Activated CD4-positive, alpha-beta T cell treated with anti-CD3 and anti-CD28 coated beads, Interleukin-2, amount 10 ng/mL, durations not matched to agents 7 days and 5 days (primary cell): ENCODE measurements at regions of chr1 and their contacts with region 1.

Region 1: DNA sequence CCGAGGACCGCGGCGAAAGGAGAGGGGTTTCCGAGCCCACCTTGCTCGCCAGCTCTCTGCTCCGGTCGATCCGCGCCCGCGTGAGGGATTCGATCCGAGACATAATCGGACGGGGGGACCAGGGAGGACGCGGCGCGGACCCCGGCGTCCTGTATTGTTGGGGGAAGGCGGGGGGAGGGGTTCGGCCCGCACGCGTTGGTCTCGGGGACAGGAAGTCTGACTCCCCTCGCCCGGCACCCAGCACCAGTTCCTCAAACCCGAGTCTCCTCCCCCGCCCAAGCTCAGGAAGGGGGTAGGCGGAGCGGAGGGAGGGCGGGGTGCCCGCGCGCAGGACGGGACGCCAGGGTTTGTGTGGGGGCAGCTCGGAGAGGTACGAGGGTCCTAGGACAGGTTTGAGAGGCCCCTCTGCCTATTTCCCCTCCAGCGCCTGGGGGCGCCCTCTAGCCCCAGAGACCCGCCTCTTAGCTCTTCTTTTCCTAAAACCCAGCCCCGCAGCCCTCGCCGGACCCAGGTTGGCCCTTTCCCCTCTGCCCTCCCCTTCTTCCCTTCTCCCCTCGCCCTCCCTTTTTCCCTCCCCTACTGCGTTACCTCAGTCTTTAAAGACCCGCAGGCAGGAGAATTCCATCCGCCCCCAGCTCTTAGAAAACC is at the start of gene ARHGEF2:
- DNase-seq: peak; percentile 84
- H3K4me3 Mint-ChIP-seq: peak within 1 kb of the TSS; percentile 99
- H3K27ac Mint-ChIP-seq: peak within 1 kb of the TSS; percentile 87
- H3K4me1 Mint-ChIP-seq: peaks cover 70% of the 10 kb centered on the region
- H3K27me3 Mint-ChIP-seq: no peaks in the 10 kb centered on the region
- total RNA-seq, gene ARHGEF2: 157 to 191 TPM

Region 2: GRCh38 chr1:155957411-155957915 is 21.0 kb before region 1 on chr1:
- CTCF ChIA-PET with region 1: interaction called, 15 read pairs
- POLR2A ChIA-PET with region 1: no interaction called
- DNase-seq: no peak
- H3K4me3 Mint-ChIP-seq: no peak overlapping the region
- H3K27ac Mint-ChIP-seq: no peak overlapping the region
- H3K4me1 Mint-ChIP-seq: peaks cover 19% of the 10 kb centered on the region
- H3K27me3 Mint-ChIP-seq: no peaks in the 10 kb centered on the region

Region 3: DNA sequence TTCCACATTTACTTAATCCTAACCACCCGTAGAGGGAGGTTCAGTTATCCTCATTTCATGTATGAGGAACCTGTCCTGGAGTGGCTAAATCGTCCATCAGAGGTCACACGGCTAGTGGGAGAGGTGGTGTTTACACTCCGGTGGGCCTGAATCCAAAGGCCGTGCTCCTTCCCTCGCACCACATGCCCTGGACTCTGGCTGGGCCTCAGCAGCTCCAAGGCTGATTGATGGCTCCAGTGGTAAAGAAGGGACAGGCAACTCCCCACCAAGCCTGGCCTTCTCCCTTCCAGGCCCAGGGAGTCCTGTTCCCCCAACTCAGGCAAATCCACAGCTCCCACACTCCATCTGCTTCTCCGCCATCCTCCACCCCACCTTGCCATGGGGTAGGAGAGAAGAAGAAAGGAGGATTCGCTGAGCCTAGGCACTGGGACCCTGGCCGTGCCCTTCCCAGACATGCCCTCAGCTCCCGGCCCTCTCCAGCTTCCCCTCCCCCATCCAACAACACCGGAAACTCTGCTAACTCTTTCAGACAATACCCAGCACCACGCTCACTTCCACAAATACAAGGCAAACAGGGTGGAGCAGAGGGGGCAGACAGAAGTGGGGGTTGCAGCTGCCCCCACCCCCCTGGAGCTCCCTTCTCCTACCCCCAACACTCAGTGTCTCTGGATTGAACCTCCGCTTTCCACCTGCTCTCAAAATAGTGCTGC is 11.0 kb before region 1 on chr1:
- CTCF ChIA-PET with region 1: interaction called, 35 read pairs
- POLR2A ChIA-PET with region 1: no interaction called
- DNase-seq: peak; percentile 47
- H3K4me3 Mint-ChIP-seq: peak overlapping the region; percentile 40
- H3K27ac Mint-ChIP-seq: peak overlapping the region; percentile 90
- H3K4me1 Mint-ChIP-seq: peaks cover 76% of the 10 kb centered on the region
- H3K27me3 Mint-ChIP-seq: no peaks in the 10 kb centered on the region